ENCODE measurements at regions of chr12 and their contacts with region 1.

Region 1: GRCh38 chr12:54398995-54399793 is 14.7 kb upstream of the ZNF385A start:
- DNase-seq: peak in 1 of 2 experiments; percentile 98
- H3K4me3 ChIP-seq: no peak overlapping the region
- H3K27ac ChIP-seq: no peak overlapping the region
- H3K4me1 ChIP-seq: no peaks in the 10 kb centered on the region
- H3K27me3 ChIP-seq: no peaks in the 10 kb centered on the region
- CTCF ChIP-seq: peak; percentile 97 to 100 (median 99)
- EP300 ChIP-seq: no peak
- POLR2A ChIP-seq: no peak
- RAD21 ChIP-seq: peak; percentile 96 to 97

Region 2: GRCh38 chr12:54201001-54201794 is 198.0 kb before region 1 on chr12:
- CTCF ChIA-PET with region 1: no interaction called
- POLR2A ChIA-PET with region 1: no interaction called
- DNase-seq: peak in 1 of 2 experiments; percentile 90
- H3K4me3 ChIP-seq: no peak overlapping the region
- H3K27ac ChIP-seq: no peak overlapping the region
- H3K4me1 ChIP-seq: peaks cover 0 to 5% (median 0%) of the 10 kb centered on the region in 4 experiments; a peak in 3 of 7 replicates
- H3K27me3 ChIP-seq: peaks cover 6 to 61% (median 39%) of the 10 kb centered on the region in 4 experiments
- CTCF ChIP-seq: peak; percentile 97 to 100 (median 99)
- EP300 ChIP-seq: no peak
- POLR2A ChIP-seq: no peak
- RAD21 ChIP-seq: peak; percentile 83 to 89

Region 3: GRCh38 chr12:54419088-54419892 is 20.1 kb after region 1 on chr12 and contains the start of gene ITGA5:
- CTCF ChIA-PET with region 1: interaction called, 742 read pairs
- POLR2A ChIA-PET with region 1: interaction called, 16 read pairs
- DNase-seq: peak in 1 of 2 experiments; percentile 76
- H3K4me3 ChIP-seq: peak within 1 kb of the TSS; percentile 67 to 92 (median 76)
- H3K27ac ChIP-seq: no peak within 1 kb of the TSS
- H3K4me1 ChIP-seq: peaks cover 6 to 16% (median 9%) of the 10 kb centered on the region in 4 experiments
- H3K27me3 ChIP-seq: peaks cover 0 to 22% (median 18%) of the 10 kb centered on the region in 4 experiments; a peak in 6 of 7 replicates
- CTCF ChIP-seq: no peak
- EP300 ChIP-seq: no peak
- POLR2A ChIP-seq: no peak
- RAD21 ChIP-seq: no peak
- total RNA-seq, gene ITGA5: 19.0 and 19.4 TPM in 2 replicates

Region 4: DNA sequence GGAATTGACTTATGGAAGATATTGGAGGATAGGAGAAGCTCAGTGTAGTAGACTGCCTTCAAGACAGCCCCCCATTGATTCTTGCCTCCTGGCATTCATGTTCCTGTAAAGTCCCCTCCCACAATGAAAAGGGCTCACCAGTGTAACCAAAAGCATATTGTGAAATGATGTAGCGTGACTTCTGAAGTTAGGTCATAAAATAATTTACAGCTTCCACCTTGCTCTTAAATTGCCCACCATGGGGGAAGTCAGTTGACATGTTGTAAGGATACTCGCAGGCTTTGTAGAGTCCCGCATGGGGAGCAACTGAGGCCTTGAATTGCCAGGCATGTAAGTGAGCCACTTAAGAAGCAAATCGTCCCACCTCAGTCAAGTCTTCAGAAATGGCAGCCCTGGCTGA is 49.1 kb after region 1 on chr12:
- CTCF ChIA-PET with region 1: interaction called, 742 read pairs
- POLR2A ChIA-PET with region 1: no interaction called
- DNase-seq: no peak
- H3K4me3 ChIP-seq: no peak overlapping the region
- H3K27ac ChIP-seq: no peak overlapping the region
- H3K4me1 ChIP-seq: no peaks in the 10 kb centered on the region
- H3K27me3 ChIP-seq: peaks cover 57 to 89% (median 76%) of the 10 kb centered on the region in 4 experiments
- CTCF ChIP-seq: no peak
- EP300 ChIP-seq: no peak
- POLR2A ChIP-seq: no peak
- RAD21 ChIP-seq: no peak

Region 5: DNA sequence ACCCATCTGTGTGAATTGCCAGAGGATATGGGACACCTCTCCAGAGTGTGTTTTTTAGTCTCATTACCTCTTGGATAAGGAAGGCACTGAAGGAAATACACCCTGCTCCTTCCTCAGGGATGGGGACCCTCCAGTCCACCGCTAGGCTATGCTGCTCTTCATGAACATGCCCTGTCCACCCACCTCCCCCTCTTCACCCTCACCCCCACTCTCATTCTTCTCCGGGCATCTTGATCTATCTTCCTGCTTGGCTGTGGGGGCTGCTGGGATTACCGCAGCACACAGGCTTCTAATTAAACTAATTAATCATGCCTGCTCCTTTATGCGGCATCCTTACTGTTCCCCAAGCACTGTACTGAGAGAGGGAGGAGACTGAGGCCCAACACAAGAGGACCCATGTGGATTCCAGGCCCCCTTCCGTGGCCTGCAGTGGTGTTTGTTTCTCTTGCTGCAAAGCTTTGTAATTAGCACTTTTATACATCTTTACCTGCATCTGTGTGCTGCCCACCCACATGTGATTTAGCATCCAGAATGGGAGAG is 142.6 kb after region 1 on chr12:
- CTCF ChIA-PET with region 1: interaction called, 11 read pairs
- POLR2A ChIA-PET with region 1: no interaction called
- DNase-seq: no peak
- H3K4me3 ChIP-seq: no peak overlapping the region
- H3K27ac ChIP-seq: no peak overlapping the region
- H3K4me1 ChIP-seq: peaks cover 0 to 9% (median 3%) of the 10 kb centered on the region in 4 experiments; a peak in 4 of 7 replicates
- H3K27me3 ChIP-seq: peaks cover 0 to 7% (median 3%) of the 10 kb centered on the region in 4 experiments; a peak in 4 of 7 replicates
- CTCF ChIP-seq: no peak
- EP300 ChIP-seq: no peak
- POLR2A ChIP-seq: no peak
- RAD21 ChIP-seq: no peak

Region 6: GRCh38 chr12:54950071-54950727 is 551.0 kb after region 1 on chr12:
- CTCF ChIA-PET with region 1: no interaction called
- POLR2A ChIA-PET with region 1: no interaction called
- DNase-seq: no peak
- H3K4me3 ChIP-seq: no peak overlapping the region
- H3K27ac ChIP-seq: no peak overlapping the region
- H3K4me1 ChIP-seq: no peaks in the 10 kb centered on the region; a peak in 1 of 7 replicates
- H3K27me3 ChIP-seq: no peaks in the 10 kb centered on the region
- CTCF ChIP-seq: no peak
- EP300 ChIP-seq: no peak
- POLR2A ChIP-seq: no peak
- RAD21 ChIP-seq: no peak